ENCODE measurements at regions of chr2 and their contacts with region 1.

Region 1: DNA sequence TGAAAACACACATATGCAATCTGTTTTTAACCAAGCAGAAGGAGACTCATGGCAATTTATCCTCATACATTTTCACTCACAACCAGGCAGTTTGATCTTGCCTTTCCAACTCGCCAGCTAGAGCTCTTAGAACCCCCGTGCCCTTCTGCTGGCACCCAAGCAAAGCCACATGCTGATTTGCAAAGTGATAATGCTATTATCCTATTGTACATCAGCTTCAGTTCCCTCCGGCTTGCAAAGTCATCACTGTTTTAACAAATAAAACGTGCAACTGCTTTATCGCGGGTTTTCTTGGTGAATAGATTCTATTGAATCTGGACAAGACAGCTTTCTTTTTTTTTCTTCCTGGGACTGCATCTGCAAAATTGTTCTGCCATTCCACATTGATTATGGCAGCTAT is 314.6 kb downstream of the LNPK start:
- DNase-seq: no peak
- H3K4me3 ChIP-seq: no peak overlapping the region
- H3K27ac ChIP-seq: no peak overlapping the region
- H3K4me1 ChIP-seq: no peaks in the 10 kb centered on the region
- H3K27me3 ChIP-seq: peaks cover 0 to 32% (median 4%) of the 10 kb centered on the region in 7 donors
- CTCF ChIP-seq: no peak
- POLR2A ChIP-seq: no peak

Region 2: GRCh38 chr2:175372704-175373701 is 314.5 kb before region 1 on chr2:
- intact Hi-C with region 1: loop called (anchors 5 kb)
- DNase-seq: no peak
- H3K4me3 ChIP-seq: no peak overlapping the region
- H3K27ac ChIP-seq: peak overlapping the region in 4 of 8 donors; percentile 23 to 57 (median 42)
- H3K4me1 ChIP-seq: peaks cover 0 to 25% (median 4%) of the 10 kb centered on the region in 6 donors
- H3K27me3 ChIP-seq: peaks cover 0 to 25% (median 0%) of the 10 kb centered on the region in 7 donors
- CTCF ChIP-seq: no peak
- POLR2A ChIP-seq: no peak

Region 3: DNA sequence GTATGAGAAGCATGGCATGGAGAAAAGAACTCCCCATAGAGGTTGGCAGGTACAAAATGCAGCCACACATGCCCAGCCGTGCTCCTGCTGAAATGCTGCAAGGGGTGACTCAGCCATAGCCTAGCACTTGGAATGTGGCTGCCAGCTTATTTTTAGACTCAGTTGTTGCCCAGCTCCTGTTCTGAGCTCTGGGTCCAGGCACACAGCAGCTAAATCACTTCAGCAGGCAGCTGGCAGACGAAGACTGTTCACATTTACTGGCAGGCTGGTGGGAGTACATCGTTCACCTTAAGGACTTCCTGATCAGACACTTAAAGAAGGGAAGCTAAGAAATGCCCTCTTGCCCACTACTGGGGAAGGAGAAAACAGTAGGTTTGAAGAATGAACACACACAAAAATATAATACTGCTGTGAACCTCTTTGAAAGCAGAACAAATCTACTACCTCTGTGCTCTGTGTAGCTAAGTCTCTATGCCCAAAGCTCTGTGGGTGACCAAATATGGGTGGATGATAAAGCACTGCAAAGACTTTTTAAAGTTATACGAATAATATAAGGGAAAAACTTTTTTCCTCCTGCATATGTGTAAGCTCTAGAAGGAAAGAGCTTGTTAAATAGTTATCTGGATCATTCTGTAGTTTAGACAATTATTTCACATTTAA is 168.5 kb after region 1 on chr2:
- intact Hi-C with region 1: no loop called
- DNase-seq: no peak
- H3K4me3 ChIP-seq: no peak overlapping the region
- H3K27ac ChIP-seq: no peak overlapping the region
- H3K4me1 ChIP-seq: no peaks in the 10 kb centered on the region
- H3K27me3 ChIP-seq: no peaks in the 10 kb centered on the region
- CTCF ChIP-seq: no peak
- POLR2A ChIP-seq: no peak

Region 4: DNA sequence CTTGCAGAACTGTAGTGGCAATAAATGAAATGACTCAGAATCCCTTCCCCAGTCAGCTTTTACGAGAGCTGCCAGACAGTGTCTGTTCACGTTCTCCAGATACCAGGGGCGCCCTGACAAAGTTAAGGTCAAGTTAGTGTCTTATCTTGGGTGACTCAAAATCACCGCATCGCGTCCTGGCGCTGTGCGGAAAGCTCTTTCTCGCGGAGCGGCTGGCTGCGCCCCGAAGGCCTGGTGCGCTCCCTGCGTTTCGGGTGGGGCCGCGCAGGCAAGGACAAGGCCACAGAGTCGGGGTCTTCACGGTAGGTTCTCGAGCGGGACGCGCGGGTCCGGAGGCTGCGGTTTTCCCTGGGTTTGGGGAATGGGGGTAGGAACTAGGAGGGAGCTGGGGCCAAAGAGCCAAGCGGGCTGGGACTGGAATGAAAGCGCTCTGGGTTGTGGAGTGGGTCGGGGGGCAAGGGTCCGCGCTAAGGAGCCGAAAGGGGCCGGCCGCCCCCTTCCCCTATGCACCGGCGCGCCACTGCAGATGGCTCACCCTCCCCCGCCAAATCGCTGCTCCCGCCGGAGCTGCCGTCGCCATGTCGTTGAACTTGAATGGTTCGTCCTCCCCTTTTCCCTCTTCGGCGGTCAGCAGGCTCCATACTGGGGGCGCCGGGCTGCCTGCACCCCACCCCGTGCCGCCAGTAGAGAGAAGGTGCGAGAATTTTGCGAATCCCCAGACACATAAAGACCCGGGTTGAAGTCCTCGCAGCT is 417.0 kb after region 1 on chr2:
- intact Hi-C with region 1: loop called (anchors 5 kb)
- DNase-seq: no peak
- H3K4me3 ChIP-seq: peak overlapping the region in 1 of 8 donors; percentile 30
- H3K27ac ChIP-seq: no peak overlapping the region
- H3K4me1 ChIP-seq: peaks cover 15 to 66% (median 41%) of the 10 kb centered on the region in 6 donors
- H3K27me3 ChIP-seq: peaks cover 27 to 100% (median 99%) of the 10 kb centered on the region in 7 donors
- CTCF ChIP-seq: no peak
- POLR2A ChIP-seq: no peak

Measured in spleen (tissue), 13 donors.